ENCODE measurements at regions of chr13 and their contacts with region 1.

Region 1: GRCh38 chr13:30802953-30803478 is 67.7 kb downstream of the ALOX5AP start:
- DNase-seq: no peak
- ATAC-seq: peak; percentile 92
- H3K4me3 ChIP-seq: no peak overlapping the region
- H3K27ac ChIP-seq: peak overlapping the region; percentile 92
- H3K4me1 ChIP-seq: peaks cover 27% of the 10 kb centered on the region
- H3K27me3 ChIP-seq: no peaks in the 10 kb centered on the region
- CTCF ChIP-seq: peak; percentile 86

Region 2: GRCh38 chr13:29664591-29664990 is 1138.4 kb before region 1 on chr13:
- CTCF ChIA-PET with region 1: no interaction called
- POLR2A ChIA-PET with region 1: no interaction called
- in situ Hi-C with region 1: no loop called
- intact Hi-C with region 1: no loop called
- DNase-seq: no peak
- ATAC-seq: no peak
- H3K4me3 ChIP-seq: no peak overlapping the region
- H3K27ac ChIP-seq: no peak overlapping the region
- H3K4me1 ChIP-seq: no peaks in the 10 kb centered on the region
- H3K27me3 ChIP-seq: no peaks in the 10 kb centered on the region
- CTCF ChIP-seq: no peak

Region 3: DNA sequence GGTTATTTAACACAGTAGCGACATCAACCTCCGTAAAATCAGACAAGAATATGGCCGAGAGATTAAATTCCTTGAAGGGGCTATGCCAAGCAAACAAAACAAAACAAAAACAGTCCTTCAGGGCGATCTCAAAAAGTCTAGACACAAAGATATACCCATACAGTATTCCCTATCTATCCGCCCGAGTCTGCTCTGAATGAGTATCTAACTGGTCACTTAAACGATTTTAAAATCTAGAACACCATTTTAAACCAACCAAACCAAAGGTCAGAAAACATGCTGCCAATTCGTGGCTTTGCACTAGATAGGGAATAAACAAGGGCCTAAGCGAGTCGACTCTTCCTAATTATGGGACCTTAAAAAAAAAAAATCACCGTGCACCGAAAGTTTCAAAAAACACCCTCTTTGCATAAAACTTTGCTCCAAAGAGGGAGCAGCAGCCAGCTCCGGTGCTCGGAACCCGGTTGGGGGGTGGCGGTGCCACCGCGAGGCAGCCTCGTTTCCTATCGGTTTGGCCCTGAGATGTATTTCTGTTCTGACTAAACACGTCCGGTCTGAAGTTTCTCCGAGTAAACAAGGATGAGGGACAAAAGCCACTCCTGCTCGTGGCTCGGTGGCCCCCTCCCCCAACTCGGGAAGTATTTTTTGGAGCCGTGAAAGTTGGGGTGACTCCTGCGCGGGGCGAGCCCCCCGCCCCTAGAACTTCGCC is 339.1 kb before region 1 on chr13:
- CTCF ChIA-PET with region 1: no interaction called
- POLR2A ChIA-PET with region 1: no interaction called
- in situ Hi-C with region 1: no loop called
- intact Hi-C with region 1: no loop called
- DNase-seq: no peak
- ATAC-seq: peak; percentile 4
- H3K4me3 ChIP-seq: peak overlapping the region; percentile 61 to 82
- H3K27ac ChIP-seq: peak overlapping the region; percentile 91
- H3K4me1 ChIP-seq: peaks cover 6% of the 10 kb centered on the region
- H3K27me3 ChIP-seq: no peaks in the 10 kb centered on the region
- CTCF ChIP-seq: no peak

Region 4: DNA sequence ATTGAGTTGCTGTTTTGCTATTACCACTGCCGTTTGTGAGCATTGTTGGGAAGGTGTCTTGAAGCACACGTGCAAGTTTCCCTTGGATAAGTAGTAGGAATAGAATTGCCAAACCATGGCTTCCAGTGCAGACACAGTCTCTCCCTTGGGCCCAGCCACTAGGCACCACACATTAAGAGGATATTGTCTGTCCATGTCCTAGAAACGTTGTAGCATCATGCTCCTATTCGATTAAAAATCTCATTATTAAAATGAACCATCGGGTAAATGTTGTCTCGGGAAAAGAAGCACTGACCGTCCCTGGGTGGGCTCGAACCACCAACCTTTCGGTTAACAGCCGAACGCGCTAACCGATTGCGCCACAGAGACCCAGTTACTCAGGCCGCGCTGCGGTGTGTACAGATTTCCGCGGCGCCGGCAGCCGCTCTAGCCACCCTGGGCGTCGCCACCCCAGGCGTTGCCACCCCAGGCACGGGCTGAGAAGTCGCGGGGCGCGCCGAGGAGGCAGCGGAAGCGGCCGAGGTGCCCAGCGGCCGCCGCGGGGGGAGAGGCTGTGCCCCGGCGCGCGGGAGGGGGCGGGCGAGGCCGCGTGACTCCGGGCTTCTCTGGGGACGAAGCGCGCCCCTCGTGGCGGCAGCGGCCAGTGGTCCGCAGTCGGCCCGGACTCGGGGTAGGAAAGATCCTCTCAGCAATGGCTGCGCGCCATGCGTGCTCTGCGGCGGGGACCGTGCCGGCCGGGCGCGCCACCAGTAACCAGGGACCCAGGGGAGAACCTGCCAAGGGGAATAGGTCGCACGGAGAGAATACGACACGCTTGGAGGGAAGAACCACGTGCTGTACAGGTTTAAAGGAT is 129.1 kb before region 1 on chr13:
- CTCF ChIA-PET with region 1: no interaction called
- POLR2A ChIA-PET with region 1: interaction called, 10 read pairs
- in situ Hi-C with region 1: no loop called
- intact Hi-C with region 1: loop called (anchors 2 kb)
- DNase-seq: peak; percentile 68
- ATAC-seq: peak; percentile 97
- H3K4me3 ChIP-seq: peak overlapping the region; percentile 31 to 43
- H3K27ac ChIP-seq: peak overlapping the region; percentile 82
- H3K4me1 ChIP-seq: no peaks in the 10 kb centered on the region; the same call in 1 of the 2 replicates
- H3K27me3 ChIP-seq: no peaks in the 10 kb centered on the region
- CTCF ChIP-seq: peak; percentile 79

Region 5: GRCh38 chr13:30679483-30680330 is 123.3 kb before region 1 on chr13:
- CTCF ChIA-PET with region 1: interaction called, 5 read pairs
- POLR2A ChIA-PET with region 1: no interaction called
- in situ Hi-C with region 1: no loop called
- intact Hi-C with region 1: loop called (anchors 2 kb)
- DNase-seq: peak; percentile 30
- ATAC-seq: peak; percentile 80
- H3K4me3 ChIP-seq: no peak overlapping the region
- H3K27ac ChIP-seq: peak overlapping the region; percentile 84
- H3K4me1 ChIP-seq: peaks cover 18% of the 10 kb centered on the region
- H3K27me3 ChIP-seq: no peaks in the 10 kb centered on the region
- CTCF ChIP-seq: peak; percentile 77

Region 6: GRCh38 chr13:30739761-30740642 is 63.0 kb before region 1 on chr13:
- CTCF ChIA-PET with region 1: no interaction called
- POLR2A ChIA-PET with region 1: interaction called, 15 read pairs
- in situ Hi-C with region 1: no loop called
- intact Hi-C with region 1: loop called (anchors 10 kb)
- DNase-seq: no peak
- ATAC-seq: peak; percentile 76
- H3K4me3 ChIP-seq: peak overlapping the region; percentile 9 to 35; a peak in 2 of 4 replicates
- H3K27ac ChIP-seq: peak overlapping the region; percentile 91
- H3K4me1 ChIP-seq: peaks cover 48% of the 10 kb centered on the region
- H3K27me3 ChIP-seq: no peaks in the 10 kb centered on the region
- CTCF ChIP-seq: no peak

Region 7: DNA sequence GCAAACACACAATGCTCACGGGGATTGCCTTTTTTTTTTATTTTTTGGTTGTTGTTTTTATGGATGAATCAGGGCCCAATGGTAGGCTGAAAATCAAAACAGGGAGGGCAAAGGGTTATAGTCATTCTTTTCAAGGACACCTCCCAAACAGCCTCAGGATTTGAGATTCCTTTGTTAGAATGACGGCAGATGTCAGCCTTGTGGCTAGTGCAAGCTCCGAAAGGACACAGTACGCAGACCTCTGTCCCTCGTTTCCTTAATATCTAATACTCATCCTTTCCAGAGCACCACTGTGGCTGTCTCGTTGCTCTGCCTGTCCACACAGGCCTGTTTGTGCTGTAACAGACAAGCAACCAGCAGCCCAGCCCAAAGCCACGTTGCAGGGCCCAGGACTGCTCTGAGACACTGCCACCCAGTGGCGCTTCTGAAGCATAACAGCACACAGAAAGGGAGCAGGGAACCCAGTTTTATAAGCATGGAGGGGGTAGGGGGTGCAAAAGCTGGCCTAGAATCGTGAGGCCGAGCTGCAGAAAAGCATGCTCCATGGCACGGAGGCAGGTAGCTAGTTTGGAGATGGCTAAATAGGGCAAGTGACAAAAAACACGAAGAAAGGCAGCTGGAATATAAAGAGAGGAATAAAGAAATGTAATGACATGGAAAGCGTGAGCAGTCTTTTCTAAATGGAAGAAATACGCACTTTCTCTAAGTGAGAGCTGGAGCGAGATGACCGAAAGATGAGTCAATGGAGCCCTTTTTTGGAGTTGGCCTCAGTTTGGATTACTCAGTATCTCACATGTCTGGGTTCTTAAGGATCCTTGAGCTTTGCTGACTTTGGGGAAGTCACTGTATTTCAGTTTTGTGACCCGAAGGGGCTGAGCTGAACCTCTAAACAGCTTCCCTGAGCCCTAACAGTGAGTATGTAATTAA is 62.4 kb after region 1 on chr13:
- CTCF ChIA-PET with region 1: interaction called, 4 read pairs
- POLR2A ChIA-PET with region 1: no interaction called
- in situ Hi-C with region 1: no loop called
- intact Hi-C with region 1: loop called (anchors 1 kb)
- DNase-seq: no peak
- ATAC-seq: peak; percentile 98
- H3K4me3 ChIP-seq: no peak overlapping the region
- H3K27ac ChIP-seq: peak overlapping the region; percentile 93
- H3K4me1 ChIP-seq: peaks cover 25% of the 10 kb centered on the region
- H3K27me3 ChIP-seq: no peaks in the 10 kb centered on the region
- CTCF ChIP-seq: peak; percentile 89

Region 8: DNA sequence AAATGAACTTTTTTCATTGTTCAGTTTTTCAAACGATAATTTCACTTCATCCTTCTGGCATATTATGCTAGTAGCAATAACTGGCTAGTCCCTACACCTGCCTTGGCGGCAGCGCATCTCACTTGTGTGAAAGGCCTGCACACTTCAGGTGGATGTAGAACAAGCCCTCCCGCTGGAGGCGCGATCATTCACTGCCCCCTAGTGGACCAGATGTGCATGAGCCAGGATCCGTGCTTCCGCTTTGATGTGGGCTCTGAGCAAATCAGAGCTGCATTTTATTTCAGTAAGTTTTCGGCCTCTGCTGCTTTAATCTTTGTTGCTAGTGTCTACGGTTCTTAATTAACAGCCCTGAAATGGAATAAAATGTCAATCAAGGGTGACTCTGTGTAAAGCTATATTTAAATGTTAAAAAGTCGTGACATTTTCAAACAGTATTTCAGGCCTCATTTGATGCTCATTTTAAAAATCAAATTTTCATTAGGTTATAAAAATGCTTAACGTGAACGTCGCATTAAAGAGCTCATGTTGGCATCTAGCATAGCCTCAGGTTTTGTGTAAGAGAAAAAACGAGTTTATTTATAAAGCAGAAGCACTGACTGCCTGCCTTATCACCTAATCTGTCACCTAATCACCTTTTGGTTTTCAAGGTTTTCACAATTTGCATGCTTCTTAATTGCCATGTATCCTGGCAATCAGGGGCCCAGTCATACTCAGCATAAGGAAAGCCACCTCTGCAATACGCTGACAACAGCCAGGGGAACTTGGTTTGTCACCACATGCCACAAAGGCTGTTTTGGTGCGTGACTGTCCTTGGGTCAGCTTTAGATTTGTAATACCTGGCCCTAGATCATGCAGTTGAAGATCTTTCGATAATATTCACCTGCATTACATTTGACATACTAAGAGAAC is 241.6 kb after region 1 on chr13:
- CTCF ChIA-PET with region 1: interaction called, 8 read pairs
- POLR2A ChIA-PET with region 1: no interaction called
- in situ Hi-C with region 1: no loop called
- intact Hi-C with region 1: loop called (anchors 10 kb)
- DNase-seq: peak; percentile 48
- ATAC-seq: peak; percentile 86
- H3K4me3 ChIP-seq: no peak overlapping the region
- H3K27ac ChIP-seq: peak overlapping the region; percentile 89
- H3K4me1 ChIP-seq: peaks cover 21% of the 10 kb centered on the region
- H3K27me3 ChIP-seq: no peaks in the 10 kb centered on the region
- CTCF ChIP-seq: peak; percentile 92

Measured in Panc1 (cell line).